ENCODE measurements at regions of chr20 and their contacts with region 1.

Region 1: DNA sequence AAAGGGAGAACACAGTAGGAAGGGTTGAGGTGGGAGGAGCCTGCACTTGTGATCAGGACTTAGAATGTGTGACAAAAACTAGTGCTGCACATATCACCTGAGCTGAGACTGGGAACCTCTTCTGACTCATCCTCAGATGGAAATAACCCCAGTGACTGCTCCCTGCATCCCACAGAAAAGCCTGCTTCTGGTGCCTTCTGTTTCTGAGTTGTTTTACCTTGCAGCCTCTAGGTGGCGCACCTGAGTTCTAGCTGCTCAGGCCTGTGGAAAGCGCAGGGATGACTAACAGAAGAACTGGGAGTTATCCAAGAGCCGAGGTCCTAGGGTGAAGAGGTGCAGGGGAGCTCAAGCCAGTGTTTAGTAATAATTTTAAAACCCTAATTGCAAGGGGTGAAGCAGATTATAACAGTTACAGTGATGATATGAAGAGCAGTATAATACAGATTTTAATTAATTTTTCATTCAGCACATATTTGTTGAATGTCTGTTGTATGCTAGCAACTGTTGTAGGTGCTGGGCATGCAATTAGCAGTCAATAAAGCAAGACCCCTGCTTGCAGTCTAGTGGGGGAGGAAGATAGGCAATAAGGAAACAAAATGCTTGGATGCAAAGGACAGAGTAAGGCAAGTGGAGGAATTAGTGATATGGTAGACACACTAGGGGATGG is 302.5 kb downstream of the DHX35 start:
- DNase-seq: peak; percentile 56
- CTCF ChIP-seq: peak; percentile 88

Region 2: GRCh38 chr20:39245685-39246311 is 18.8 kb before region 1 on chr20:
- CTCF ChIA-PET with region 1: interaction called, 33 read pairs
- POLR2A ChIA-PET with region 1: no interaction called
- DNase-seq: no peak
- CTCF ChIP-seq: no peak

Region 3: DNA sequence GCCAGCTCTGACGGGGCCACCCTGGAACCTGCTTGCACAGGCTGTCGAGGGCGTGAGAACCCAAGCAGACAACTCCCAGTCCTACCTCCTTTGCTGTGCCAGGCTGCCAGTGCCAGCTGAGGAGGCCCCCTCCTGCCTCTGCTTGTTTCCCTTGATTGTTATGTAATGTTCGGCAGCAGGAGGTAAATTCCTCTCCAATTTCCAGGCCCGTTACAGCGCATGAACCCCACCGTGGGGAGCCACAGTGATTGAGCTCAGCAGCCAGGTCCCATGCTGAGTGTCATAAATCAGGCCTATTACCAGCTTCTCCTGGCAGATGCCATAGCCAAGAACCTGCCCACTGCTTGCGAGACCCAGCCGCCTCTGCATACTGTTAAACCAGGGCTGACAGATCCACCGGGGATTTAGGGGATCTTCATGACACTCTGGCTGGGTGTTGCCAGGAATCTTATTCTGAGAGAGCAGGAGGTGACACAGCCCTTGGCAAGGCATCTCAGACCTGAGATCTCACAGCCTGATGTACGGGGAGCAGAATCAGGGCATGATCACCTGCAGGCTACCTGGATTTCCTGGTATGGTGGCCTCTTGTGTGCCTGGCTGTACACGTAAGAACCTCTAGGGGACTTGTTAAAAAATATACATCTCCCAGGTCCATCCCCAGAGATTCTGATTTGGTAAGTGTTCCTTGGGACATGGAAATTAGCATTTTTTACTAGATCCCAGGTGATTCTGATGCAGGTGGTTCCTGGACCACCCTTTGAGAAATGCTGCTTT is 18.2 kb after region 1 on chr20:
- CTCF ChIA-PET with region 1: interaction called, 14 read pairs
- POLR2A ChIA-PET with region 1: no interaction called
- DNase-seq: no peak
- CTCF ChIP-seq: no peak

Measured in GM10248 (cell line).